ENCODE measurements at regions of chr1 and their contacts with region 1.

Region 1: GRCh38 chr1:19485362-19486187 is at the start of gene CAPZB:
- DNase-seq: peak; percentile 97 to 99
- ATAC-seq: peak; percentile 92
- H3K4me3 ChIP-seq: peak within 1 kb of the TSS; percentile 84 to 97
- H3K27ac ChIP-seq: peak within 1 kb of the TSS; percentile 72 to 85
- H3K4me1 ChIP-seq: peaks cover 0 to 7% of the 10 kb centered on the region in 2 donors
- H3K27me3 ChIP-seq: no peaks in the 10 kb centered on the region
- total RNA-seq, gene CAPZB: 289 to 297 TPM

Region 2: GRCh38 chr1:19377812-19378718 is 107.5 kb before region 1 on chr1:
- intact Hi-C with region 1: no loop called
- DNase-seq: no peak
- ATAC-seq: no peak
- H3K4me3 ChIP-seq: no peak overlapping the region
- H3K27ac ChIP-seq: no peak overlapping the region
- H3K4me1 ChIP-seq: no peaks in the 10 kb centered on the region
- H3K27me3 ChIP-seq: no peaks in the 10 kb centered on the region

Region 3: GRCh38 chr1:19390901-19391595 is 94.5 kb before region 1 on chr1:
- intact Hi-C with region 1: loop called (anchors 2 to 5 kb)
- DNase-seq: peak in 1 of 2 donors; percentile 80
- ATAC-seq: peak; percentile 70
- H3K4me3 ChIP-seq: no peak overlapping the region
- H3K27ac ChIP-seq: peak overlapping the region; percentile 58 to 92
- H3K4me1 ChIP-seq: peaks cover under 1 to 2% of the 10 kb centered on the region in 2 donors
- H3K27me3 ChIP-seq: no peaks in the 10 kb centered on the region

Region 4: DNA sequence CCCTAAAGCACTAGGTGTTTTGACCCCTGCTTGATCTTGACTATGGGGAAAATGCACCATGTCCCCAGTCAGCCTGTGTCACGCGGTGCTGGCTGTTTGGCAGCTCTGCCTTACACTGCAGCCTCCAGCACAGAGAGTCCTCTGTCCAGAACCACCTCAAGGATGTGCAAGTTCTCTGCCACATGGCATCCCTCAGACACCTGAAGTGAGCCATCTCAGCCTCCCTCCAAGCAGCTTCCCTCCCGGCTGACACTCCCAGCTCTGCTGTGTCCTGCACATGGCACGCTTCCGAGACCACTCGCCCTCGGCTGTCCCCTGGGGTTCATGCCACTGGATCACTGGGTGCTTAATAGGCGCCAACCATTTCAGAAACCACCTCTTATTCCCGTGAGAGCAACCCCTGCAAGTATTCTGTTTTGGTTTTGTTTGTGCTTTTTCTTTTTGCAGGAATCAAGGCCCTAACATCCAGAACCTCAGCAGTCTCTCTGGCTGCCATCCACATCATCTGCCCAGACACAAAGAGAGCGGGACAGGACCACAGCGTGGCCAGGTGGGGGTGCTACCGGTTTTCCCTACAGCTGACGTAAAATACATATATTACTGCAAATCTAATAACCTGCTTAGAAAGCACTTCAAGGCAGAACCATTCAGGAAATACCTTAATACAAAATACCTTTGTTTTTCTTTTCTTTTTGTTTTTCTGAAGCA is 46.0 kb before region 1 on chr1:
- intact Hi-C with region 1: loop called in 1 of 2 experiments (anchors 5 kb)
- DNase-seq: peak in 1 of 2 donors; percentile 76
- ATAC-seq: no peak
- H3K4me3 ChIP-seq: no peak overlapping the region
- H3K27ac ChIP-seq: peak overlapping the region; percentile 24 to 58
- H3K4me1 ChIP-seq: peaks cover 15 to 19% of the 10 kb centered on the region in 2 donors
- H3K27me3 ChIP-seq: no peaks in the 10 kb centered on the region

Region 5: DNA sequence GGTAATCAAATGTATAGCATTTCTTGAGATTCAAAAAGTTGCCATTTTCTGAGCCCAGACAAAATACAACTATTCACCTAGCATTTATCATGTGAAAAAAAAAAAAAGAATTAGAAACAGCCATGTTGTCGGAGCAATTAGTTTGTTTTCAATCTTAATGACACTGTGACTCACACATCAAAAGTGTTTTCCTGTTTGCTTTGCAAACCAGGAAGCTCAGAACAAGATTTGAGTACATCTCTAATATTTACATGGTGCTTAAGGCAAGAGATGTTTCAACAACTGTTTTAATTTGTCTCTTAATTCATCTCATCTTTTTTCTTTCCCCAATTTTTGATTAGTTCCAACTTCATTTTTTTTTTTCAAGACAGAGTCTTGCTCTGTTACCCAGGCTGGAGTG is 62.2 kb after region 1 on chr1:
- intact Hi-C with region 1: no loop called
- DNase-seq: no peak
- ATAC-seq: no peak
- H3K4me3 ChIP-seq: no peak overlapping the region
- H3K27ac ChIP-seq: no peak overlapping the region
- H3K4me1 ChIP-seq: no peaks in the 10 kb centered on the region
- H3K27me3 ChIP-seq: no peaks in the 10 kb centered on the region

Region 6: DNA sequence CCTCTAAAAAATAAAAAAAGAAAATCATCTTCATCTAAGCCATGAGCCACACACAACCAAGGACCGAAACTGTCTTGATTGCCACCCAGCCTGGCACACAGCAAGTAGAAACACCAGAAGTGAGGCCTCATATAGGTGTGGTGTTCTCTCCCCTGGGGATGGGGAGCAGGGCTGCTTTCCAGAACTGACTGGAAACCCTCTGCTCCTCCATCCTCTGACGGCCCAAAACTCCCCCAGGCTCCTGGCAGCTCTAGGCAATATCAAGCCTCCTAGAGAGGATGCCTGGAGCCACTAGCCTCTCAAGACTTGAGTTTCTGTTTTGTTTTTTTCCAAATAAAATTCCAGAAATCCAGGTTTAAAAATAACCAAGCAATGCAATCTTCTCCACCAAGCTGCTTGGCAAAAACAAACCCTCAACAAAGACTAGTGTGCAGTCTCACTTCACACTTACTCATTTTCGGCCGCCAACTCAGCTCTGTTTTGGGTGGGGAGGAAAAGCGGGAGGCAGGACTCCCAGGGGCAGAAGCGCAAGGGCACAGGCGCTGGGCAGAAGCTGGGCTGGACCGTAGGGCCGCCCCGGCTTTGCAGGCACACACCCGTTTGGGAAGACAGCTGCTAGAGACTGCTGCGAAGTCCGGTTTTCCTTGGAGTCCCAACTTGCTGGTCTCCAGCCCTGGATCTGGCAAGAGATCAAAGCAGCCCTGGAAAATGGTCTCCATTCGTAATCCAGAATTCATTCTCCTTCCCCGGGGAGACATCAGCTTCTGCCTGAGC is 77.9 kb after region 1 on chr1:
- intact Hi-C with region 1: loop called in 1 of 2 experiments (anchors 2 kb)
- DNase-seq: peak; percentile 76 to 83
- ATAC-seq: peak; percentile 89
- H3K4me3 ChIP-seq: no peak overlapping the region
- H3K27ac ChIP-seq: peak overlapping the region; percentile 69 to 83
- H3K4me1 ChIP-seq: no peaks in the 10 kb centered on the region
- H3K27me3 ChIP-seq: no peaks in the 10 kb centered on the region

Region 7: DNA sequence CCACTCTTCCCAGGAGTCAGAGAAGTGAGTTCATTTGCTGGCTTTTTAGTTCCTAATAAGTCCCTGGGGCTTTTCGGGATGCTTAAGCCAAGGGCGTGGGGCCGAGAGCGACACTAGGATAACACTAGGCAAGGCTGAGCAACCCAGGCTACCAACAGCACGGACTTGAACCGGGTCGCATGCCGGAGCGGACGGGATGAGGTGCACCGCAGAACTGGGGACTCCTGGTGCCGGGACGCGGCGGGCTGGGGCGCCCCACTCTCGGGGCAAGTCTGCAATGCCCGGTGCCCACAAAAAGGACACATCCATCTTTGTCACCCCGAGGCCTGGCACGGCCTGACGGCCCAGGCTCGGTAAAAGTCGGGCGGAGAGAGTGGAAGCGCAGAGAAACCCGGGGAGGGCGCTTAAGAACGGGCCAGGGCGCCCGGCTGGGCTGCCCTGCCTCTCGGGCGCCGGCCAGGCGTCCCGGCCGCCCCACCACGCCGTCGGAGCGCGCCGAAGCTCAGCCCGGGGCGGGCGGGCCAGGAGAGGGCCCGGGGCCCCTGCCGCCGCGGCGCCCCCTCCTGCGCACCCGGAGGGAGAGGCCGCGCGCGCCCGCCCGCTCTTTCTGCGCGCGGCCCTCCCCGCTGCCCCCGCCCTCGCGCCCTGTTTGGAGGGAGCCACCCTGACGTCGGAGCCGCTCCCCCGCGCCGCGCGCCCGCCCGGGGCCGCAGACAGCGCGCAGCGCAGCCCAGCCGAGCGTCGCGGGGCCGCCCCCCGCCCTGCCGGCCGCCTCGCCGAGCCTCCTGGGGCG is 158.2 kb after region 1 on chr1 and contains the start of gene NBL1:
- intact Hi-C with region 1: loop called (anchors 5 kb)
- DNase-seq: peak; percentile 86 to 92
- ATAC-seq: peak; percentile 81
- H3K4me3 ChIP-seq: peak within 1 kb of the TSS; percentile 38 to 89
- H3K27ac ChIP-seq: peak within 1 kb of the TSS; percentile 73 to 78
- H3K4me1 ChIP-seq: no peaks in the 10 kb centered on the region
- H3K27me3 ChIP-seq: no peaks in the 10 kb centered on the region
- total RNA-seq, gene NBL1: 134 to 188 TPM